Activated T-helper 1 cell treated with anti-CD3 and anti-CD28 coated beads, Interleukin-12 subunit alpha, Interleukin-12 subunit beta, Interleukin-2, Interleukin-4 antibody, amounts not matched to agents 30 ng/mL and 10 ng/mL and 1 ng/mL, durations not matched to agents 14 hours and 24 hours and 36 hours (primary cell): ENCODE measurements at regions of chr14 and their contacts with region 1.

Region 1: GRCh38 chr14:64387694-64388532 is at the start of gene MTHFD1:
- DNase-seq: peak; percentile 96
- H3K4me3 Mint-ChIP-seq: peak within 1 kb of the TSS; percentile 97
- H3K27ac Mint-ChIP-seq: peak within 1 kb of the TSS; percentile 90
- H3K4me1 Mint-ChIP-seq: peaks cover 29% of the 10 kb centered on the region
- H3K27me3 Mint-ChIP-seq: no peaks in the 10 kb centered on the region
- total RNA-seq, gene MTHFD1: 241 and 244 TPM in 2 replicates

Region 2: DNA sequence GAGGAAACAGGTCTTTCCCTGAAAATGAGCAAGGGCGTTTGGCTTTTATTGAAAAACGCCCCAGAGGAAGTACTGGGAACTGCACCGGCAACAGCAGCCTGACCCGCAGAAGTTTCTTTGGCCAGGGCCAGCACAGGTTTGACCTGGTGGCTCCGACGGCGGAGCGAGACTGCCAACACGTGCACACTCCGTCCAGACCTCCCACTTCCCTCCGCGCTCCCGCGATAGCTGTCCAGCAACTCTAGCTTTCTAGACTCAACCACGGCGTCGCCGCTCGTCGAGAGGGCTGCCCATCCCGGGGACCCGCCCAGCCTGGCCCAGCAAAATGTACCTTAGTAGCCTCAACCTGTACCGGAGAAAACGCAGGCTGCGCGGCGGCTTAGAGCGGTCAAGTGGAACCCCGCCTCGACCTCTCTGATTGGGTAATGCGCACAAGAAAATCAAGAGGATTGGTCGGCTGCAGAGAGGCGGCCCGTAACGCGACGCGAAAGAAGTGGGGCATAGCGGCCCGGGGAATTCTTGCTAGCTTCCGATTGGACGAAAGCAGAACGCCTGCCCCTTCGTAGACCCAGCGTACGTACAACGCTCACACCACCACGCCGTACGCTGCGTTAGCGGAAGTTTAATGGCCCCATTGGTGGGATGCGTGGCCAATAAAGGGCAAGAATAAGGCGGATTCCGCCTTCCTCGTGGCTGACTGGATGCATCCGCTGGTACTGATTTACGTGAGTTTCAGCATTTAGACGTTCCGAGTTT is 746.3 kb before region 1 on chr14 and contains the start of gene WDR89:
- intact Hi-C with region 1: loop called (anchors 2 kb)
- DNase-seq: peak; percentile 97
- H3K4me3 Mint-ChIP-seq: peak within 1 kb of the TSS; percentile 88
- H3K27ac Mint-ChIP-seq: peak within 1 kb of the TSS; percentile 98
- H3K4me1 Mint-ChIP-seq: peaks cover 27% of the 10 kb centered on the region
- H3K27me3 Mint-ChIP-seq: no peaks in the 10 kb centered on the region
- total RNA-seq, gene WDR89: 26.8 and 27.4 TPM in 2 replicates

Region 3: DNA sequence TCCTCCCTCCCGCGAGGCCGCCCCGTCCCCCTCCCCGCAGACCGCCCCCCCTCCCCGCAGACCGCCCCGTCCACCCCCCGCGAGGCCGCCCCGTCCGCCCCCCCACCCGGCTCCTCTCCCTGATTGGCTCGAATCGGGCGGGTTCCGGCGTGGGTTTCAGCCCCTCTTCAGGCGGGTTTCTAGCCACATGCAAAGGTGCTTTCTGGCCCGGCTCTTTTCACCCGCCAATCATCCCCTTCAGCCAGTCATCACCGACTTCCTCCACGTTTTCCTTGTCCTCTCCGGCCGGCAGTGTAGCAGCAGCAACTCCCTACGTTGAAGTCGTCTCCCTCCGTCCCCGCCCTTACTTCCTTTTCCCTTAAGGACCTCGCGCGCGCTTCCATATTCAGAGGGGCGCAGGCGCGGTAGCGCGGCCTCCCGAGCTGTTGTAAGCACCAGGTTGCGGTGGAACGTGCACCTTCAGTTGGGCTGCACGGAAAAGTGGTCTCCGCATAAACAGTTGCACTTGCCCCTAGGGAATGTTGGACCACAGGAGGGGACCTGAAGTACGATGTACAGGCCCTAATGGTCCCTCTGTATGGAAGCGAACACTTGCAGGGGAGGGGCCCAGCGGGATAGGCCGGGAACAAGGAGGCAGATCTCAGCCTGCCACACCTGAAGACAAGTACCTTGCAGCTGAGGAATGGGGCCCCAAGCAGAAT is 49.1 kb before region 1 on chr14:
- intact Hi-C with region 1: loop called (anchors 1 kb)
- DNase-seq: peak; percentile 85
- H3K4me3 Mint-ChIP-seq: peak overlapping the region; percentile 81
- H3K27ac Mint-ChIP-seq: peak overlapping the region; percentile 84
- H3K4me1 Mint-ChIP-seq: peaks cover 29% of the 10 kb centered on the region
- H3K27me3 Mint-ChIP-seq: no peaks in the 10 kb centered on the region

Region 4: GRCh38 chr14:64465191-64465822 is 77.4 kb after region 1 on chr14 and contains the start of gene AKAP5:
- intact Hi-C with region 1: loop called (anchors 1 kb)
- DNase-seq: peak; percentile 62
- H3K4me3 Mint-ChIP-seq: peak within 1 kb of the TSS; percentile 88
- H3K27ac Mint-ChIP-seq: peak within 1 kb of the TSS; percentile 88
- H3K4me1 Mint-ChIP-seq: peaks cover 35% of the 10 kb centered on the region
- H3K27me3 Mint-ChIP-seq: peaks cover 6% of the 10 kb centered on the region
- total RNA-seq, gene AKAP5: 1.1 and 1.5 TPM in 2 replicates

Region 5: DNA sequence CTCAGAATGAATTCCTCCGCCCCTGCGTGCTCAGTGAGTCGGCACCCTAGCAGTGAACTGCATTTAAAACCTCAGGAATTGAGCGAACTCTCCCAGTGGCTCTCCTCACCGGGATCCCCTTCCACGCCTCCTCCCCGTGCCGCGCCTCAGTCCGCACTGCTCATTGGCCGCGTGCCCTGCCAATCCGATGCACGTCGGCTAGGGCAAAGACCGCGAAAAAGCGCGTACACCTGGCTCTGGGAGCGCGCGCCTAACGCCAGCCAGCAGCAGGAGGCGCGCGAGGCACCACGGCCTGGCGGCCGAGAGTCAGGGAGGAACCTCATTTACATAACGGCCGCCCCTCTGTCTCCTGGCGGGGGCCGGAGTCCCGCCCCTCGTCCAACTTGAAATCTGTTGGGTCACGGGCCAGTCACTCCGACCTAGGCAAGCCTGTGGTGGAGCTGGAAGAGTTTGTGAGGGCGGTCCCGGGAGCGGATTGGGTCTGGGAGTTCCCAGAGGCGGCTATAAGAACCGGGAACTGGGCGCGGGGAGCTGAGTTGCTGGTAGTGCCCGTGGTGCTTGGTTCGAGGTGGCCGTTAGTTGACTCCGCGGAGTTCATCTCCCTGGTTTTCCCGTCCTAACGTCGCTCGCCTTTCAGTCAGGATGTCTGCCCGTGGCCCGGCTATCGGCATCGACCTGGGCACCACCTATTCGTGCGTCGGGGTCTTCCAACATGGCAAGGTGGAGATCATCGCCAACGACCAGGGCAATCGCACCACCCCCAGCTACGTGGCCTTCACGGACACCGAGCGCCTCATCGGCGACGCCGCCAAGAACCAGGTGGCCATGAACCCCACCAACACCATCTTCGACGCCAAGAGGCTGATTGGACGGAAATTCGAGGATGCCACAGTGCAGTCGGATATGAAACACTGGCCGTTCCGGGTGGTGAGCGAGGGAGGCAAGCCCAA is 152.6 kb after region 1 on chr14 and contains the start of gene HSPA2:
- intact Hi-C with region 1: loop called (anchors 1 kb)
- DNase-seq: peak; percentile 94
- H3K4me3 Mint-ChIP-seq: peak within 1 kb of the TSS; percentile 91
- H3K27ac Mint-ChIP-seq: peak within 1 kb of the TSS; percentile 92
- H3K4me1 Mint-ChIP-seq: peaks cover 42% of the 10 kb centered on the region
- H3K27me3 Mint-ChIP-seq: peaks cover 56% of the 10 kb centered on the region
- total RNA-seq, gene HSPA2: 11.2 and 11.6 TPM in 2 replicates

Region 6: DNA sequence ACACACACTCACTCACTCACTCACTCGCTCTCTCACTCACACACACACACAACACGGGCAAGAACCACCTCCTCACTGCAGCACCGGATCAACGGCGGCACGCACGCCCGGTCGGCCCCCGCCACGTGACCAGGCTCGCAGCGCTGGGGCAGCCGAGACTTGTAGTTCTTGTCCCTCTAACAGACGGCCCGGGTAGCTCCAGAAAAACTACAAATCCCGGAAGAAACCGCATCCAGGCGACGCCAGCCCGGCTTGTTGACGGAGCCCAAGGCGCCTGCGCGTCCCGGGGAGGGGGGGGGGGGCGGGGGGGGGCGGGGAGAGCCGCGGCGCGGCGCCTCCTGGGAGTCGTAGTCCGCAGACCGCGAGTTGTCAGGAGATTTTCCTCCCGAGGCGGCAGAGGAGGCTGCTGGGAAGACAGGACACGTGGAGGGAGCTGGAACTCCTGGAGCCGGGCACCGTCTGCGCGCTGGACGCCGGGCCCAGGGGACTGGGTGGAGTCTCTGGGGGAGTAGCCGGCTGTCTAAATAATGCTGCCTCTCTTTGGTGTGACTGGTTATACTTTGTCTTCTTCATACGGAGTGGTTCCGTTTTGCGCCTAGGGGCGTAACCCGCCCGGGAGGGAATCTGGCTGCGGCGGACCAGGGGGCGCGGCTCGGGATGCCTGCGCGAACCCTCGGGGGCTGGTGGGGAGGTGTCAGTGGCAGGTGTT is 714.7 kb after region 1 on chr14 and contains the start of gene MAX:
- intact Hi-C with region 1: loop called (anchors 2 kb)
- DNase-seq: peak; percentile 98
- H3K4me3 Mint-ChIP-seq: peak within 1 kb of the TSS; percentile 95
- H3K27ac Mint-ChIP-seq: peak within 1 kb of the TSS; percentile 95
- H3K4me1 Mint-ChIP-seq: peaks cover 33% of the 10 kb centered on the region
- H3K27me3 Mint-ChIP-seq: peaks cover 6% of the 10 kb centered on the region
- total RNA-seq, gene MAX: 135 and 137 TPM in 2 replicates